ENCODE measurements at regions of chr22 and their contacts with region 1.

Region 1: DNA sequence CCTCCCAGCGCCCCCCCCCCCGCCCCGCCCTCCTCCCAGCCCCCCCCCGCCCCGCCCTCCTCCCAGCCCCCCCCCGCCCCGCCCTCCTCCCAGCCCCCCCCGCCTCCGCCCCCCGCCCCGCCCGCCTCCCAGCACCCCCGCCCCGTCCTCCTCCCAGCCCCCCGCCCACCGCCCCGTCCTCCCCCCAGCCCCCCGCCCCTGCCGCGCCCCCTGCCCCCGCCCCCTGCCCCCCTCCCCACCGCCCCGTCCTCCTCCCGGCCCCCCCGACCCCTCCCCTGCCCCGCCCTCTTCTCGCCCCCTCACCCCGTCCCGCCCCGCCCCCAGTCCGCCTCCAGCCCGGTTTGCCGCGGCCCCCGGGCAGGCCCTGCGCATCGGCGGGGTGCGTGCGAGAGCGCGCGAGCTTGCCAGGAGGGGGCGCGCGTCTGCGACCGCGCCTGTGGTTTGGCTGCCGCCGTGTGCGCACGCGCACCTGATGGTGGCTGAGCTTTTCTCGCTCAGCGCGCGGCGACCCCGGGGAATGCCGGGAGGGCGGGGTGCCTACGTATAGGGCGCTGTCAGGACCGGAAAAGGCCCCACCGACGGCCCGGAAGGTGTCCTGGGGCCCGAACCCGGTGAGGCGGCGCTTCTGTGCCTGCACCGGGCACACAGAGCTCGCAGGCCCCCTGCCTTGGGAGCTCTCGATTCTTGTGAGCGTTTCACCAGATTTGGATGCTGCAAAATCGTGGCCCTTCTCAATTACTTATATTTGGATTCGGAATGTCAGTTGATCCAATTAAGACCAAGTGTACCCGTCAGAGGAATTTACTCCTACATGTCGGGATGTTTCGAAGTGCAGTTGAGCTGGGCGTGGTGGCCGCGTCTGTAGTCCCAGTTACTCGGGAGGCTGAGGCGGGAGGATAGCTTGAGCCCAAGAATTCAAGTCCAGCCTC is 501 bp upstream of the TTLL12 start:
- DNase-seq: peak; percentile 98
- ATAC-seq: peak; percentile 96
- H3K4me3 Mint-ChIP-seq: peak overlapping the region; percentile 83
- H3K27ac Mint-ChIP-seq: peak overlapping the region; percentile 93
- H3K4me1 Mint-ChIP-seq: peaks cover 23% of the 10 kb centered on the region
- H3K27me3 Mint-ChIP-seq: no peaks in the 10 kb centered on the region

Region 2: GRCh38 chr22:42649246-42650099 is 538.0 kb before region 1 on chr22 and contains the start of gene CYB5R3:
- CTCF ChIA-PET with region 1: no interaction called
- POLR2A ChIA-PET with region 1: no interaction called
- intact Hi-C with region 1: loop called in 1 of 2 experiments (anchors 1 kb)
- DNase-seq: peak; percentile 91
- ATAC-seq: peak; percentile 87
- H3K4me3 Mint-ChIP-seq: peak within 1 kb of the TSS; percentile 92
- H3K27ac Mint-ChIP-seq: peak within 1 kb of the TSS; percentile 92
- H3K4me1 Mint-ChIP-seq: peaks cover 22% of the 10 kb centered on the region
- H3K27me3 Mint-ChIP-seq: no peaks in the 10 kb centered on the region
- total RNA-seq, gene CYB5R3: 79.5 to 101 TPM

Region 3: DNA sequence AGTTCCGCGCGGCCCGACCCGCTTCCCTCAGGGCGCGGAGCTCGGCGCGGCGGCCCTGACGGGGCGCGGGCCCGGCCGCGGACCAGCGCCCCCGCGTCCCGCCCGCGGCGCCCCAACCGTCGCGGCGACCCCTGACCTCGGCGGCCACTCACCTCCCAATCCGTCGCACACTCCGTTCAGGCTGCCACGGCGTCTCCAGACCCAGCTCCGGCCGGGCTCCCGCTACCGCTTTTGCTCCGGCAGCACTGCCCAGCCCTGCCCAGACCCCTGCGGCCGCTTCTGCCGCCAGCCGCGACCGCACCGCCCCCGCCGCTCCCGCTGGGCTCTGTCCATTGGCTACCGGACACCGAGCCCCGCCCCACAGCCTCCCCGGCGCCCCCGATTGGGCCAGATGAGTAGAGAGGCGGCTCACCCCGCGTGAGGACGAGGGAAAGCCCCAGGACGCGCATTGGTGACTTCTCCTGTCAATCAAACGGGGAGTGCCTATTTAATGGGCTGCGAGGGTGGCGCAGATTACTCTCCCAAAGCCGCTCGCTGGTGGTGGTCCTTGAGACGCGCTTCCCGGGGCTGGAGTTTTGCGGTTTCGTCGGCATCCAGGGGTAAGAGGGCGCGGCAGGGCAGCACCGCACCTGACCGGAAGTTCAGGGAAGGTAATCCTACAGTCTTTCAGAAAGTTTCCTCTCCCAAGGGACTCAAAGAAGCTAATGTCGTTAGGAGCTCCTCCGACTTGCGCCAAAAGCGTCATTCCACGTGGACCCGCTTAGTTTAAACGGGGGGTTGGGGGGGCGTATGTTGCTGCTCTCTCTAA is 172.4 kb before region 1 on chr22 and contains the start of gene PACSIN2:
- CTCF ChIA-PET with region 1: no interaction called
- POLR2A ChIA-PET with region 1: no interaction called
- intact Hi-C with region 1: loop called in 1 of 2 experiments (anchors 1 kb)
- DNase-seq: peak; percentile 99
- ATAC-seq: peak; percentile 100
- H3K4me3 Mint-ChIP-seq: peak within 1 kb of the TSS; percentile 90
- H3K27ac Mint-ChIP-seq: peak within 1 kb of the TSS; percentile 82
- H3K4me1 Mint-ChIP-seq: peaks cover 21% of the 10 kb centered on the region
- H3K27me3 Mint-ChIP-seq: no peaks in the 10 kb centered on the region
- total RNA-seq, gene PACSIN2: 27.9 to 28.1 TPM

Region 4: GRCh38 chr22:43110444-43110926 is 77.0 kb before region 1 on chr22 and contains the start of gene BIK:
- CTCF ChIA-PET with region 1: no interaction called
- POLR2A ChIA-PET with region 1: no interaction called
- intact Hi-C with region 1: loop called in 1 of 2 experiments (anchors 2 kb)
- DNase-seq: peak; percentile 59
- ATAC-seq: peak; percentile 72
- H3K4me3 Mint-ChIP-seq: peak within 1 kb of the TSS; percentile 74
- H3K27ac Mint-ChIP-seq: no peak within 1 kb of the TSS
- H3K4me1 Mint-ChIP-seq: peaks cover 3% of the 10 kb centered on the region
- H3K27me3 Mint-ChIP-seq: peaks cover 3% of the 10 kb centered on the region
- total RNA-seq, gene BIK: 1.4 to 1.9 TPM

Region 5: DNA sequence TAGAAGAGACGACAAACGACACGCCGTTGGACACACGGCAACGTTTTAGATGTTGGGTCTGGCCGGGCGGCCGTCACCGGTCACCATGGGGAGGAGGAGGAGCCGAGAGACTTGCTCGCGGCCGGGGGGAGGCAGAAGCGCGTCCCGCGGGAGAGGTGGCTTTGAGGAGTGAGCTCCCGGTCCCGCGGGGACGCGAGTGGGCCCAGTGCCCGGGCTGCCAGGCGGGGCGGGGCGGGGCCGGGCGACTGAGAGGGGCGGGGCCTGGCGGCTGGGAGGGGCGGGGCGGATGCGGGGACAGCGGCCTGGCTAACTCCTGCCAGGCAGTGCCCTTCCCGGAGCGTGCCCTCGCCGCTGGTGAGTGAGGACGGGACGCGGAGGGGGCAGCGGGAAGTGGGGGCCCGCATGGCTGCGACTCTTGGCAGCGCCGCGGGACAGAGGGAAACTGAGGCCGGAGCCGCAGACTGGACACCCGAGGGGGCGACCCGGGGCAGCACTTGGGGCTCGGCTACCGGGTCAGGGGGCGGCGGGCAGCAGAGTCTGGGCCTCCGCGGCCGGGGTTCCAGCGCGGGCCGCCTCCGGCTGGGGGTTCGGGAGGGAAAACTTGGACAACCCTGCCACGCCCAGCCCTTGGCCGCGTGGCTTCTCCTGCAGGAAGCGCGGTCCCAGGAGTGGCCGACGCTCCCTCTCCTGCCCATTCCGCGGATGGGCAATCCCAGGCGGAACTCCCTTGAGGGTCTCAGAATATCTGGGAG is 36.0 kb before region 1 on chr22 and contains the start of gene TSPO:
- CTCF ChIA-PET with region 1: interaction called, 3 read pairs
- POLR2A ChIA-PET with region 1: interaction called, 3 read pairs
- intact Hi-C with region 1: loop called in 1 of 2 experiments (anchors 1 kb)
- DNase-seq: peak; percentile 81
- ATAC-seq: peak; percentile 58
- H3K4me3 Mint-ChIP-seq: peak within 1 kb of the TSS; percentile 88
- H3K27ac Mint-ChIP-seq: peak within 1 kb of the TSS; percentile 90
- H3K4me1 Mint-ChIP-seq: peaks cover 35% of the 10 kb centered on the region
- H3K27me3 Mint-ChIP-seq: no peaks in the 10 kb centered on the region
- total RNA-seq, gene TSPO: 61.7 to 114 TPM

Region 6: DNA sequence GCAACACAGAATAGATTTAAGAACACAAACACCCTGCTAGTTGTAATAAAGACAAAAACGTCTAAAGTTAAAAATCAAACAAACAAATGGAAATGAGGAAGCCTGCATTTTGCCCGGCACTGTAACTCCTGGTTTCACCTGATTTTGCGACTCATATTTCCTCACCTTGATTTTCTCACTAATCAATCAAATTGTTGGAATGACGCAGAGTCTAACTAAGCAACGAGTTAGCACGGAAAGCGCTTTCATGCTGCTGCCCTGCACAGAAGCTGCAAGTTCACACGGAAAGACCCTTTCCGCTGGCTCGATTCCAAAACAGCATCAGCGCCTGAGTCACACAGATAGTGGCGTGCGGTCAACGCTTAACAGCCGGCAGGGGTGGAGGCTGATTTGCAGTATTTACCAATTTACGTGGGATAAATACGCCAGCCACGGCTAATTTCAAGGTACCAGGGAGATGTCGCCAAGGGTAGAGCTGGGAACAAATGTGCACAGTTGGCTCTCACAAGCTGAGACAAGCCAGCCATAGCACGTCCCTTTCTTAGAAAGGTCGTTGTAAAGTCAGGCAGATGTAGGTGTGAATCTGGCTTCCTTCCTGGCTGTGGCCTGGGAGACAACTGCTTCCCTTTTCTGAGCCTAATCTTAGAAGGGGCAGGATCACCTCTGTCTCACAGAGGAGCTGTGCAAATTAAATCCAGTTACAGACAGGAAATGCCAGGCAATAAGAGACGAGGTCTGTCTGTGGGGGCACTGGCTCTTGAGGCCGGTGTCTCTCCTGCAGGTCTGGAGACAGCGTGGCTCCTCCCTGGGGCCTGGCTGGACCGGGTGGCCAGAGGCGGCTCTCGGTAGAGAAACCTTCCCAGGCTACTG is 76.4 kb after region 1 on chr22:
- CTCF ChIA-PET with region 1: no interaction called
- POLR2A ChIA-PET with region 1: interaction called, 4 read pairs
- intact Hi-C with region 1: loop called in 1 of 2 experiments (anchors 1 kb)
- DNase-seq: peak; percentile 93
- ATAC-seq: peak; percentile 94
- H3K4me3 Mint-ChIP-seq: peak overlapping the region; percentile 49
- H3K27ac Mint-ChIP-seq: peak overlapping the region; percentile 16
- H3K4me1 Mint-ChIP-seq: peaks cover 26% of the 10 kb centered on the region
- H3K27me3 Mint-ChIP-seq: peaks cover 3% of the 10 kb centered on the region

Region 7: DNA sequence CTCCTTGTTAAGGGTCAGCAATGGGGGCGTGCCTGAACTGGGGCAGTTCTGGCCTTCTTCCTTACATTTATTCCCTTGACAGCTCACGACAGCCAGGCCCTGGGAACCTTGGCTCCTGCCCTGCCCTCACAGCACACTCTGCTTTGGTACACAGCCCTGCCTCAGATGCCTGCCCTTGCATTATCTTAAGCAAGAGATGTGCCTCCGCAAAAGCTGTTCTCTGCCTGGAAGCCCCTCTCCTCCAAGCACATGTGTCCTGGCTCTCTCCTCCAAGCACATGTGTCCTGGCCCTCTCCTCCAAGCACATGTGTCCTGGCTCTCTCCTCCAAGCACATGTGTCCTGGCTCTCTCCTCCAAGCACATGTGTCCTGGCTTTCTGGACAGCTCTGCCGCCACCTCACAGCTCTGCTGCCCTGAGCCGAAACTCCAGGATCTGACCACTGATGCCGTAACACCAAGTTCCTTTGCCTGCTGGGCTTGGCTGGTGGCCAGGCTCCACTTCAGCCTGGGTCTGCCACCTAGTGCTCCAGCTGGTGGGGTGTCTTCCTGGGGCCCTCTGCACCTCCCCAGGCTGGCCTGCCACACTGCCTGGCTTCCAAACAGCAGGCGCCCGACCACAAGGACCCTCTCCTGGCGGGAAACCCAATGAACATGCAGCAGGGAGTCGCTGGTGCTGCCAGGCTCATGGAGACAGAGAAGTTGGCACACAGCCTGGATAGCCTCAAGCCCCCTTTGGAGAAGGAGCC is 102.7 kb after region 1 on chr22:
- CTCF ChIA-PET with region 1: no interaction called
- POLR2A ChIA-PET with region 1: no interaction called
- intact Hi-C with region 1: no loop called
- DNase-seq: no peak
- ATAC-seq: no peak
- H3K4me3 Mint-ChIP-seq: no peak overlapping the region
- H3K27ac Mint-ChIP-seq: no peak overlapping the region
- H3K4me1 Mint-ChIP-seq: no peaks in the 10 kb centered on the region
- H3K27me3 Mint-ChIP-seq: no peaks in the 10 kb centered on the region

Region 8: GRCh38 chr22:44497218-44497904 is 1309.9 kb after region 1 on chr22:
- CTCF ChIA-PET with region 1: no interaction called
- POLR2A ChIA-PET with region 1: no interaction called
- intact Hi-C with region 1: loop called in 1 of 2 experiments (anchors 5 kb)
- DNase-seq: no peak
- ATAC-seq: no peak
- H3K4me3 Mint-ChIP-seq: peak overlapping the region; percentile 68
- H3K27ac Mint-ChIP-seq: peak overlapping the region; percentile 47
- H3K4me1 Mint-ChIP-seq: peaks cover 30% of the 10 kb centered on the region
- H3K27me3 Mint-ChIP-seq: no peaks in the 10 kb centered on the region